Activated CD4-positive, alpha-beta memory T cell treated with anti-CD3 and anti-CD28 coated beads for 36 hours (primary cell): ENCODE measurements at regions of chr1 and their contacts with region 1.

Region 1: DNA sequence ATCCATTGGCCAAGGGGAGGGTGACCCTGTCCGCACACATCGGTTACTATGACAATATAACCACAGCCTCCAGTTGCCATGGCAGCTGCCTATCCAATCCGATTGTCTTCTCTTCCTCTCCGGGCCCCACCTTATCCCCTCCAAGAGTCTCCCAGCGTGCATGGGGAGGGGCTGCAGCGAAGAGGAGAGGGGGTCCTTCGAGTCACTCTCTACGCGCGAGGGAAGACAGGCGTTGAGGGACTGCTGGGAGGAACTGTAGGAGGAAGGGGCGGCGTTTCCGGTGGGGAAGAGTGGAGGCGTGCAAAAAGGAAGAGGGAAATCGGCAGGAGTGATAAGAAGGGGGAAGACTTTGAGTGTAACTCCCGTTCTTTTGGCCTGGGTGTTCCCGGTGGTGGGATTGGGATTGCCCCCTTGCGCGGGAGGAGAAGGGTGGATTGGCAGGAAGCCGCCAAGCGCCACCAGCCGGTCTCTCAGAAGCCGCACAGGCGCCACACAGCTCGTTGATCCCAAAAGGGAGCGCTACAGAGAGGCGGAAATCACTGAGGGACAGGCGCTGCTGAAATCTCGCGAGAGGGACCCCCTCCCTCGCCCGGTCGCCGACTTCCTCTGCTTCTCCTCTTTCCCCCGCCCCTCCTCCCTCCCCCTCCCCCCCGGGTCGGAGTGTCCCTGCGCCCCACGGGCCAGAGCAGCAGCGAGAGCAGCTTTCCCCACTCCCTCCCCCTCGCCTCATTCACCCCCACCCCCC is 384 bp upstream of the SMG7 start:
- DNase-seq: peak; percentile 98
- H3K4me3 Mint-ChIP-seq: peak overlapping the region; percentile 85
- H3K27ac Mint-ChIP-seq: peak overlapping the region; percentile 99
- H3K4me1 Mint-ChIP-seq: peaks cover 20% of the 10 kb centered on the region
- H3K27me3 Mint-ChIP-seq: no peaks in the 10 kb centered on the region

Region 2: GRCh38 chr1:182029379-182030331 is 1442.3 kb before region 1 on chr1:
- CTCF ChIA-PET with region 1: no interaction called
- POLR2A ChIA-PET with region 1: no interaction called
- intact Hi-C with region 1: loop called (anchors 5 kb)
- DNase-seq: peak; percentile 99
- H3K4me3 Mint-ChIP-seq: peak overlapping the region; percentile 88
- H3K27ac Mint-ChIP-seq: peak overlapping the region; percentile 92
- H3K4me1 Mint-ChIP-seq: peaks cover 13% of the 10 kb centered on the region
- H3K27me3 Mint-ChIP-seq: no peaks in the 10 kb centered on the region

Region 3: DNA sequence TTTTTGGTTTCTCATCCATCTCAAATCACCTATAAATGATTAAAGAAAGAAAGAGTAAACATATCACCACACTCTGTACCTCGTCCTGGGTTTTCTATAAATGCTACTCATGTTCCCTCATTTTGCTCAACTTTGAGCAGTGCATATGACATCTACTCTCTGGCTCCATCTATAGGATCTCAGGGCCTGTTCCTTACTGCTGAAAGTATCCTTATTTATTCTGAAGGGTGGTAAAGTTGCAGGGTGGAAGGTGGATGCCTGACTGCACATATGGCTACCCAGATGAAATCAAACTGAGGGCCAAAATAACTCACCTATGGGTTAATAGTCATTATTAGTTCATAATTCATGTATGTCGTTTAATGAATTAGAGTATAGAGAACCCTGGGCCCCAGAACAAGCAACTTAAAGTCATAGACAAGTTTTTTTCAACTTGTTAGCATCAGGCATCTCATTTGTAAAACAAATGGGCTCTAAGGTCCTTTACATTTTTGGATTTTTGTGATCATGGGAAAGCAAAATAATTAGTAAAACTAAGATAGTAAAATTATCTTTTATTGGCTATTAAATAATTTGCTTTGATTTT is 71.8 kb after region 1 on chr1:
- CTCF ChIA-PET with region 1: interaction called, 3 read pairs
- POLR2A ChIA-PET with region 1: no interaction called
- intact Hi-C with region 1: loop called (anchors 1 kb)
- DNase-seq: no peak
- H3K4me3 Mint-ChIP-seq: no peak overlapping the region
- H3K27ac Mint-ChIP-seq: peak overlapping the region; percentile 1
- H3K4me1 Mint-ChIP-seq: peaks cover 2% of the 10 kb centered on the region
- H3K27me3 Mint-ChIP-seq: no peaks in the 10 kb centered on the region

Region 4: GRCh38 chr1:183635606-183636333 is 163.9 kb after region 1 on chr1 and contains the start of gene ARPC5:
- CTCF ChIA-PET with region 1: interaction called, 6 read pairs
- POLR2A ChIA-PET with region 1: interaction called, 5 read pairs
- intact Hi-C with region 1: loop called (anchors 1 kb)
- DNase-seq: peak; percentile 98
- H3K4me3 Mint-ChIP-seq: peak within 1 kb of the TSS; percentile 95
- H3K27ac Mint-ChIP-seq: peak within 1 kb of the TSS; percentile 99
- H3K4me1 Mint-ChIP-seq: peaks cover 33% of the 10 kb centered on the region
- H3K27me3 Mint-ChIP-seq: no peaks in the 10 kb centered on the region
- total RNA-seq, gene ARPC5: 158 to 161 TPM

Region 5: GRCh38 chr1:183915625-183916510 is 444.0 kb after region 1 on chr1:
- CTCF ChIA-PET with region 1: no interaction called
- POLR2A ChIA-PET with region 1: no interaction called
- intact Hi-C with region 1: loop called (anchors 1 kb)
- DNase-seq: peak; percentile 83
- H3K4me3 Mint-ChIP-seq: no peak overlapping the region
- H3K27ac Mint-ChIP-seq: peak overlapping the region; percentile 46
- H3K4me1 Mint-ChIP-seq: peaks cover 13% of the 10 kb centered on the region
- H3K27me3 Mint-ChIP-seq: no peaks in the 10 kb centered on the region

Region 6: GRCh38 chr1:184051485-184052193 is 579.7 kb after region 1 on chr1 and contains the start of gene TSEN15:
- CTCF ChIA-PET with region 1: no interaction called
- POLR2A ChIA-PET with region 1: no interaction called
- intact Hi-C with region 1: loop called (anchors 2 kb)
- DNase-seq: peak; percentile 85
- H3K4me3 Mint-ChIP-seq: peak within 1 kb of the TSS; percentile 98
- H3K27ac Mint-ChIP-seq: peak within 1 kb of the TSS; percentile 96
- H3K4me1 Mint-ChIP-seq: peaks cover 33% of the 10 kb centered on the region
- H3K27me3 Mint-ChIP-seq: peaks cover 6% of the 10 kb centered on the region
- total RNA-seq, gene TSEN15: 44.1 to 44.3 TPM

Region 7: GRCh38 chr1:184866991-184867788 is 1395.3 kb after region 1 on chr1:
- CTCF ChIA-PET with region 1: no interaction called
- POLR2A ChIA-PET with region 1: no interaction called
- intact Hi-C with region 1: loop called (anchors 5 kb)
- DNase-seq: peak; percentile 79
- H3K4me3 Mint-ChIP-seq: peak overlapping the region; percentile 54
- H3K27ac Mint-ChIP-seq: peak overlapping the region; percentile 85
- H3K4me1 Mint-ChIP-seq: peaks cover 52% of the 10 kb centered on the region
- H3K27me3 Mint-ChIP-seq: no peaks in the 10 kb centered on the region